ENCODE measurements at regions of chr13 and their contacts with region 1.

Region 1: GRCh38 chr13:23570099-23570920 is at the start of gene TNFRSF19:
- DNase-seq: peak; percentile 98
- ATAC-seq: peak; percentile 88
- H3K4me3 ChIP-seq: peak within 1 kb of the TSS; percentile 58 to 94 (median 66)
- H3K27ac ChIP-seq: peak within 1 kb of the TSS; percentile 84
- H3K4me1 ChIP-seq: peaks cover 64% of the 10 kb centered on the region
- H3K27me3 ChIP-seq: no peaks in the 10 kb centered on the region
- CTCF ChIP-seq: 0 out of 2 replicates have a peak, but pooled peaks have one; percentile 13
- EP300 ChIP-seq: peak; percentile 67 to 87; a peak in 3 of 4 replicates
- POLR2A ChIP-seq: peak in 1 of 2 experiments; percentile 63; a peak in 2 of 4 replicates
- RAD21 ChIP-seq: no peak
- total RNA-seq, gene TNFRSF19: 47.7 and 77.7 TPM in 2 replicates

Region 2: DNA sequence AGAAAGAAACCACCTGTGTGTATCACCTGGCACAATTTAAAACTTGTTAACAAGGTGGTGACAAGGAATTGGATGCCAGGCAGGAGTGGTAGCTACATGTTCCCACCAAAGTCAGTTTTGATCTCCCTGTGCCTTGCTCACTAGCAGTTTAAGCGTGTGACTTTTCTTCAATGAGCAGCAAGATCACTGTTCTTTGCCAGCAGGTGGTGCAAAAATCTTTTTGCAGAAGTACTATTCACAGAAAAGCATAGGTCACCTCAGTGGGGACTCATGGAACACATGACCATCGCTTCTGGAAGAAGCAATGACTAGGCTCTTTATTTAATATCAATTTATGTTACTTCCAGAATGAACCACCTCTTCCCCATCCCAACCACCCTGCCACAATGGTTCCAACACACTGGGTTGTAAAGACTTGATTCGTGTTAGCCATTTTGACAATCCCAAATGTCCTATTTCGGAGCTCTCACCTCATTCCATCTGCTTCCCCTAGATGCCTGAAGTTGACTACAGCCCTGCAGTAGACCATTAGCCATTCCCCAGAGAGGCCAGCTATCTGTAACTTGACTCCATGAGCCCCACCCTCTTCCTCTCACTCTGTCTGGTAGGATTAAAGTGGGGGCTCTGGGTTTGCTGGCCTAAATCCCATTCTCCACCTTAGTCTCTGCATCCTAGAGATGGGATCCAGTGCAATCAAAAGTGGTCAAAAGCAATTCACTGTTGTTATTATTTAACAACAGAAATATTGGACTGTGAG is 59.2 kb before region 1 on chr13:
- CTCF ChIA-PET with region 1: interaction called, 3 read pairs
- POLR2A ChIA-PET with region 1: no interaction called
- in situ Hi-C with region 1: loop called (anchors 5 kb)
- intact Hi-C with region 1: loop called (anchors 1 kb)
- DNase-seq: peak; percentile 62
- ATAC-seq: peak; percentile 80
- H3K4me3 ChIP-seq: no peak overlapping the region
- H3K27ac ChIP-seq: no peak overlapping the region
- H3K4me1 ChIP-seq: peaks cover 2% of the 10 kb centered on the region
- H3K27me3 ChIP-seq: no peaks in the 10 kb centered on the region
- CTCF ChIP-seq: peak; percentile 72
- EP300 ChIP-seq: no peak
- POLR2A ChIP-seq: no peak
- RAD21 ChIP-seq: peak; percentile 53

Region 3: GRCh38 chr13:23558675-23559536 is 11.4 kb before region 1 on chr13:
- CTCF ChIA-PET with region 1: no interaction called
- POLR2A ChIA-PET with region 1: interaction called, 13 read pairs
- in situ Hi-C with region 1: no loop called
- intact Hi-C with region 1: loop called (anchors 2 kb)
- DNase-seq: peak; percentile 97
- ATAC-seq: peak; percentile 96
- H3K4me3 ChIP-seq: peak overlapping the region; percentile 21 to 49 (median 34); a peak in 3 of 6 replicates
- H3K27ac ChIP-seq: peak overlapping the region; percentile 90
- H3K4me1 ChIP-seq: peaks cover 66% of the 10 kb centered on the region
- H3K27me3 ChIP-seq: no peaks in the 10 kb centered on the region
- CTCF ChIP-seq: no peak
- EP300 ChIP-seq: peak; percentile 56 to 89; a peak in 3 of 4 replicates
- POLR2A ChIP-seq: no peak; a peak in 1 of 4 replicates
- RAD21 ChIP-seq: no peak

Region 4: GRCh38 chr13:23615395-23616081 is 45.2 kb after region 1 on chr13:
- CTCF ChIA-PET with region 1: no interaction called
- POLR2A ChIA-PET with region 1: interaction called, 11 read pairs
- in situ Hi-C with region 1: no loop called
- intact Hi-C with region 1: no loop called
- DNase-seq: peak; percentile 96
- ATAC-seq: peak; percentile 99
- H3K4me3 ChIP-seq: peak overlapping the region in 2 of 3 experiments; percentile 20 to 28; a peak in 3 of 6 replicates
- H3K27ac ChIP-seq: peak overlapping the region; percentile 86
- H3K4me1 ChIP-seq: peaks cover 100% of the 10 kb centered on the region
- H3K27me3 ChIP-seq: no peaks in the 10 kb centered on the region
- CTCF ChIP-seq: no peak
- EP300 ChIP-seq: peak; percentile 56 to 94; a peak in 3 of 4 replicates
- POLR2A ChIP-seq: no peak
- RAD21 ChIP-seq: 0 out of 2 replicates have a peak, but pooled peaks have one; percentile 29

Region 5: DNA sequence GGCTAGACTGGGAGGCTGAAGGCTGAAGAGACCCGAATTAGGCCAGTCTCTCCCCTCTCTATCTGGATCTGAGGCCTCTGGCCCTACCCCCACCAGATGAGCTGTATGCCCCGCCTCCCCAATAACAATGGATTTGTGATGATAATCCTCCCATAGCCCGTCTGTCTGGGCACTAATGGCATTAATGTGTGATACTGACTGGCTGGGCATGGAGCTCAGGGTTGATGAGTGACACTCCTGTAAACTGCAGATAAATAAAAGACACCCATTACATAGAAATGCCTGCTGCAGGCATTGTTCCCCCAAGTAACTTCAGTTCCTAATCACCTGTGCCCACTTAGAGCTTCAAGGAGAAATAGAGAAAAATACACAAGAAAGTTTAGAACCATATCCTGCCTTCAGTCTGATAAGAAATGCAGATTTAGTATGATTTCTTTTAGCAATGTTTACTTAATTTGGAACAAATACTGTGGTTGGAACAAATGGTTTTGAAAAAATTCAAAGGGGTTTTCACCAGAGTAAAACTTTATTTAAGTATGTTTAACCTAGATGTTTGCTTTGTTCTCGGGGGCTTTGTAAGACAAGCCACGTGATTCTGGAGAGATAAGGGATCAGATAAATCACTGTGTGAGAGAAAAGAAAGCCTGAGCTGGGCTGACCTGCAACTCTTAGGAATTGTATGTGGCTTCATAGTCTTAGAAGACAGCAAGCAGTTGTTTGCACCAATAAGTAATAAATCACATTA is 60.2 kb after region 1 on chr13:
- CTCF ChIA-PET with region 1: no interaction called
- POLR2A ChIA-PET with region 1: interaction called, 5 read pairs
- in situ Hi-C with region 1: no loop called
- intact Hi-C with region 1: loop called (anchors 5 kb)
- DNase-seq: peak; percentile 86
- ATAC-seq: peak; percentile 24
- H3K4me3 ChIP-seq: no peak overlapping the region
- H3K27ac ChIP-seq: peak overlapping the region; percentile 61
- H3K4me1 ChIP-seq: peaks cover 89% of the 10 kb centered on the region
- H3K27me3 ChIP-seq: no peaks in the 10 kb centered on the region
- CTCF ChIP-seq: no peak
- EP300 ChIP-seq: peak in 1 of 2 experiments; percentile 89; a peak in 2 of 4 replicates
- POLR2A ChIP-seq: no peak
- RAD21 ChIP-seq: no peak

Region 6: DNA sequence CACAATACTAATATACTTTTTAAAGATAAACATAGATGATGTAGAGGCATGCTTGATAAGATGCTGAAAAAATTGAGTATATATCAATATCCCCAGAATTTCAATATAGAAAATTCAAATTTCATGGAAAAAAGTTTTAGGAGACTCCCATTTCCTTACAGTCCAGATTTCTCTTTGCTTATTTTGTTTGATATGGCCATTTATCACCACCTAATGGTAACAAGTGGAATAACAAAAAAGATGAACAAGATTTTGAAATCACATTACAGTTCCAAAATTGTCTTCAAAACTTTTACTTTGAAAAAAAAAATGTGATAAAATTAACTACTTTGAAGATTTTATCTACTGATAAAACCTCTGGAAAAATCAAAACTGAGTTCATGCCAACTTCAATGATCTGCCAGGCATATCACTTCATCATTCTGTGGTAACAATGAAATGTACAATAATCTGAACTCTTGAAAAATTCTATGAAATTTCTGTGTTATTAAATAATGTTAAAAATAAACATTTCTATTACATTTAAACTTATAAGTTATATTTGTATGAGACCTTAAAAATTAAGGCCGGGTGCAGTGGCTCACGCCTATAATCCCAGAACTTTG is 301.4 kb after region 1 on chr13:
- CTCF ChIA-PET with region 1: no interaction called
- POLR2A ChIA-PET with region 1: no interaction called
- in situ Hi-C with region 1: loop called (anchors 25 kb)
- intact Hi-C with region 1: loop called (anchors 5 kb)
- DNase-seq: peak; percentile 39
- ATAC-seq: no peak
- H3K4me3 ChIP-seq: no peak overlapping the region
- H3K27ac ChIP-seq: no peak overlapping the region
- H3K4me1 ChIP-seq: peaks cover 17% of the 10 kb centered on the region
- H3K27me3 ChIP-seq: no peaks in the 10 kb centered on the region
- CTCF ChIP-seq: peak; percentile 53
- EP300 ChIP-seq: no peak
- POLR2A ChIP-seq: no peak
- RAD21 ChIP-seq: no peak

Measured in HepG2 (cell line).